ENCODE measurements at regions of chr7 and their contacts with region 1.

Region 1: DNA sequence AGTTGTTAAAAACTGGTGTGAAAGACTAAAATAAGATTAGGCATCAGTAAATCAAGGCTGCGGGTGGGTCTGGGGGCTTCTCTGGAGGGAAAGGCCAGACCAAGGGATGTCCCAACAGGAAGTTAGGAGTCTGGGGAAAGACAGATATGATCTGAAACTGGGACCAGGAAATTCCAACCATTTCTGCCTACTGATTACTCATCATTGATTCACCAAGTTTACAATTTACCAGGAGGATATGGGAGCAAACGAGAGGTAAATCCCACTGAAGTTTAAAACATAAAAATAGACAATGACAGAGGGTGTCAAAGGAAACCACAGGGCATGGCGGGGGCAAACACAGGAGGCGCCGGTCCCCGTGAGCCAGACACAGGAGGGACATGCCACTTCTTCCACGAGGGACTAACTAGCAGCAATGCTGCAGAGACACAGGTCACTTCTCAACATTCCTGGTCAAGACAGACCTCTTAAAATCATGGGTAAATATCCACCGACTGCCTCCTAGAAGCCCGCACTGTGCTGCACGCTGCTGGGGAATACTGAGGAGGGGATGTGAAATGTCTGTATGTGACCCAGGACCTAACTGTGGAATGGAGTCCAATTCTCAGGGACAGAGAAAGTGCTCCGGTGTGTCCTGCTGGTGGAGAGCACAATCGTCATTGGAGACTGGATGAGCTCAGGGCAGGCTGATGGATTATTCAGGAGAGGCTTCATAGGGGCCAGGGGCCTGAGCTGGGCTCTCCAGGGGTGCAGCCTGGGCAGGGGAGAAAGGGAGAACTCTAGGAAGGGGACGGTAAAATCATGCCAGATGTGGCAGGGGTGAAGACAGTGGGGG is 153.4 kb upstream of the KLF14 start:
- DNase-seq: no peak
- CTCF ChIP-seq: no peak

Region 2: DNA sequence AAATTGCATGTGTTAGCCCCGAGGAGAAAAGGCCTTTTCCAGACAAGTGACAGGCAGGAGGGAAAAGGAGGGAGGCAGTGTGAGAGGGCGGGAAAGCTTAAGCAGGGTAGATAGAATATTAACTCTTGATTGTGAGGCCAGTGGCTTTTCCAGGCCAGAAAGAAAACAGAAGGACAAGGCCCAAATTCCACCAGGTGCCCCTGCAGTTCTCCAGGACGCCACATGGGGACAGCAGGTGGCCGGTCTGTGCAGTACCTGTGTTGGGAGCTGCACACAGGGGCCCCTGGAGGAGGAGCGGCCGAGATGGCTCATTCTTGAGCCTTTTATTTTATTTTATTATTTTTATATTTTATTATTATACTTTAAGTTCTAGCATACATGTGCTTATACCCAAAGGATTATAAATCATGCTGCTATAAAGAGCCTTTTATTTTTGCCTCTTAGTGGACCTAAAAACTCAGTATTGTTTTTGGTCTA is 12.1 kb before region 1 on chr7:
- CTCF ChIA-PET with region 1: interaction called, 46 read pairs
- POLR2A ChIA-PET with region 1: no interaction called
- DNase-seq: peak; percentile 67
- CTCF ChIP-seq: peak; percentile 77